ENCODE measurements at regions of chr18 and their contacts with region 1.

Region 1: GRCh38 chr18:63329431-63330145 is 10.0 kb upstream of the BCL2 start:
- DNase-seq: no peak
- ATAC-seq: no peak
- H3K4me3 ChIP-seq: no peak overlapping the region
- H3K4me3 Mint-ChIP-seq: no peak overlapping the region
- H3K27ac ChIP-seq: no peak overlapping the region
- H3K27ac Mint-ChIP-seq: no peak overlapping the region
- H3K4me1 ChIP-seq: no peaks in the 10 kb centered on the region
- H3K4me1 Mint-ChIP-seq: no peaks in the 10 kb centered on the region
- H3K27me3 ChIP-seq: no peaks in the 10 kb centered on the region
- H3K27me3 Mint-ChIP-seq: no peaks in the 10 kb centered on the region

Region 2: GRCh38 chr18:62838475-62839098 is 491.0 kb before region 1 on chr18:
- CTCF ChIA-PET with region 1: no interaction called
- POLR2A ChIA-PET with region 1: no interaction called
- DNase-seq: no peak
- ATAC-seq: no peak
- H3K4me3 ChIP-seq: no peak overlapping the region
- H3K4me3 Mint-ChIP-seq: no peak overlapping the region
- H3K27ac ChIP-seq: no peak overlapping the region
- H3K27ac Mint-ChIP-seq: no peak overlapping the region
- H3K4me1 ChIP-seq: no peaks in the 10 kb centered on the region
- H3K4me1 Mint-ChIP-seq: peaks cover 0 to 5% (median 5%) of the 10 kb centered on the region in 3 donors
- H3K27me3 ChIP-seq: no peaks in the 10 kb centered on the region
- H3K27me3 Mint-ChIP-seq: no peaks in the 10 kb centered on the region

Region 3: DNA sequence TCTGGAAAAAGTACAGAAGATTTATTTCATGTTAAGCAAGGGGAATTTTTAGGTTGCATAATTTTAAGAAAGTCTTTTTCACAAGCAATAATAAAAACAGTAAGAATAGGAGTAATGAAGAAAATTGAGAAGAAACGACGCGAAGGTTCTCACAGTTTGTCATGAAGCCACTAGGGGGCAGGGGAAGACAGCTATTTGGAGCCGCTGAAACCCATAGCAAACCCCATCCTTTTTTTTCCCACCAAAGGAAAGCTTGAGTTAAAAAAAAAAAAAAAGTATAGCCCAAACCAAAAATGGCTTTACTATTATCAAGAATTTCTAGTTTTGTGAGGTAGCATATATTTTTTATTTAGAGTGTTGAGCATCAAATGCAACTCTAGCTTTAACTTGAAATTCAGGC is 313.3 kb before region 1 on chr18:
- CTCF ChIA-PET with region 1: interaction called, 21 to 58 read pairs
- POLR2A ChIA-PET with region 1: no interaction called
- DNase-seq: peak in 30 of 35 experiments; percentile 9 to 80 (median 33)
- ATAC-seq: peak in 3 of 4 experiments; percentile 54 to 77 (median 65)
- H3K4me3 ChIP-seq: no peak overlapping the region
- H3K4me3 Mint-ChIP-seq: no peak overlapping the region
- H3K27ac ChIP-seq: no peak overlapping the region
- H3K27ac Mint-ChIP-seq: no peak overlapping the region
- H3K4me1 ChIP-seq: no peaks in the 10 kb centered on the region
- H3K4me1 Mint-ChIP-seq: no peaks in the 10 kb centered on the region
- H3K27me3 ChIP-seq: peaks cover 0 to 7% of the 10 kb centered on the region in 2 experiments
- H3K27me3 Mint-ChIP-seq: peaks cover 13 to 28% of the 10 kb centered on the region in 2 donors

Region 4: GRCh38 chr18:63253428-63254372 is 75.9 kb before region 1 on chr18:
- CTCF ChIA-PET with region 1: no interaction called
- POLR2A ChIA-PET with region 1: no interaction called
- DNase-seq: no peak
- ATAC-seq: no peak
- H3K4me3 ChIP-seq: no peak overlapping the region
- H3K4me3 Mint-ChIP-seq: peak overlapping the region; percentile 13 to 49 (median 35)
- H3K27ac ChIP-seq: no peak overlapping the region
- H3K27ac Mint-ChIP-seq: peak overlapping the region; percentile 79 to 81
- H3K4me1 ChIP-seq: peaks cover 9 to 21% of the 10 kb centered on the region in 2 experiments
- H3K4me1 Mint-ChIP-seq: peaks cover 75 to 85% (median 76%) of the 10 kb centered on the region in 3 donors
- H3K27me3 ChIP-seq: no peaks in the 10 kb centered on the region
- H3K27me3 Mint-ChIP-seq: no peaks in the 10 kb centered on the region

Measured in T-cell (primary cell).